Uterus (tissue), 4 donors: ENCODE measurements at regions of chr17 and their contacts with region 1.

Region 1: DNA sequence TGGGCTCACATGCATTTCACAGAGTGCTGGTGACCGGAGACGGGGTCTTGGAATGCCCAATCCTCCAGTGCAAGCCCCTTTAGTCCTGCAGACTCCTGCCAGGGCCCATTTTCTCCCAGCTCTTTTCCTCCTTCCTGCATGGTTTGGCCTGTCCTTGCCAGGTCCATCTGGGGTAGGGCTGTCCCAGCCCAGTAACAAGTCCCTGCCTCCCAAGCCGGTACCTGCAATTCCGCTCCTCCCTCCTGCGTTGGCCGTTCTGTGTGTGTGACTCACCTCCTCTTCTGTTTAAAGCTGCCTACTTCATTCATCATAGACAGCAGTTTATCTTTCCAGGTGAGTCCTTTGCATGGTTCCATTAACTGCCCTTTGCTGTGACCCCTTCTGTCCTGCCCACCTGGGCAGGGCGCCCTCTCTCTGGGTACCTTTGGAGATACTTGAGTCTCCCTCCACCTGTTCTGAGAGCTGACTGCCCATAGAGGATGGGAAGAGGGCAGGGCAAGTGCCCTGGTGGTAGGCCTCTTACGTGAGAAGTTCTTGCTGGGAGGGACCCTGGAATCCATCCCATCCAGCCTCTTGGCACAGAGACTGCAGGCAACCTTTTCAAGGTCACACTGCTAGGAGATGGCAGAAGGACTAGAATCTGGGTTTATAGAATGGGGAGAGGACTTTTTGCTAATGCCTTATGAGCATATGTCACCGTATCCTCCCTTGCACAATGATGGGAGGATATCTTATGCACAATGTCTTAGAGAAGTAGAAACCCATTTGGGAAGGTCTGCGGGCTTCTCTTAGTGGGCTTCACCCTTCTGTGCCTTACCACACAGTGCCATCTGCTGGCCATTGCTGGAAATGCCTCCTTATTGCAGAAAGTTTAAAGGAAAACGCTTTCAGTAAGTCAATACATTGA is 29.7 kb upstream of the LGALS9 start:
- DNase-seq: peak; percentile 82 to 88
- H3K4me3 ChIP-seq: no peak overlapping the region
- H3K27ac ChIP-seq: no peak overlapping the region
- H3K4me1 ChIP-seq: no peaks in the 10 kb centered on the region
- H3K27me3 ChIP-seq: no peaks in the 10 kb centered on the region
- CTCF ChIP-seq: peak; percentile 92 to 95 (median 93)
- POLR2A ChIP-seq: no peak

Region 2: DNA sequence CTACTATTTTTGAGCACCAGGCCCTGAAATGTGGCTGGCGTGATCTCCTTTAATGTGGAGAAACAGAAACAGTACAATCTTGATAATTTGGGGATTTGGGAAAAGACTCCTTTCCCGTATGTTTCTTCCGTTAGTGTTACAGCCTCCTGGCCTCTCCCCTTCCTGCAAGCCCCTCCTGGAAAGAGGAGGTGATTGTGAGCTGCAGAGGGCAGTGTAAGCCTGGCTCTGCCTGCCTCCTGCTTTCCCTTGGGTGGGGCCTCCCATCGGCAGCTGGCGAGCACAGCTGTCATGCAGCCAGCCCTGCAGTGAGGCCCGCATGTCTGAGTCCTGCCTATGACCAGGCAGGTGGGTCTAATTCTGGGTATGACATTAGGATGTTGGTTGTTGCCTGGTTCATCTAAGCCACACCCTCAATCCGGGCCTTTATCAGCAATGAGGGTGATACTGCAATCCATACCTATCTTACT is 356.1 kb before region 1 on chr17:
- intact Hi-C with region 1: loop called (anchors 5 kb)
- DNase-seq: peak; percentile 83 to 87
- H3K4me3 ChIP-seq: no peak overlapping the region
- H3K27ac ChIP-seq: peak overlapping the region; percentile 84 to 91
- H3K4me1 ChIP-seq: peaks cover 3 to 5% of the 10 kb centered on the region in 2 donors
- H3K27me3 ChIP-seq: no peaks in the 10 kb centered on the region
- CTCF ChIP-seq: peak; percentile 66 to 79 (median 76)
- POLR2A ChIP-seq: no peak

Region 3: DNA sequence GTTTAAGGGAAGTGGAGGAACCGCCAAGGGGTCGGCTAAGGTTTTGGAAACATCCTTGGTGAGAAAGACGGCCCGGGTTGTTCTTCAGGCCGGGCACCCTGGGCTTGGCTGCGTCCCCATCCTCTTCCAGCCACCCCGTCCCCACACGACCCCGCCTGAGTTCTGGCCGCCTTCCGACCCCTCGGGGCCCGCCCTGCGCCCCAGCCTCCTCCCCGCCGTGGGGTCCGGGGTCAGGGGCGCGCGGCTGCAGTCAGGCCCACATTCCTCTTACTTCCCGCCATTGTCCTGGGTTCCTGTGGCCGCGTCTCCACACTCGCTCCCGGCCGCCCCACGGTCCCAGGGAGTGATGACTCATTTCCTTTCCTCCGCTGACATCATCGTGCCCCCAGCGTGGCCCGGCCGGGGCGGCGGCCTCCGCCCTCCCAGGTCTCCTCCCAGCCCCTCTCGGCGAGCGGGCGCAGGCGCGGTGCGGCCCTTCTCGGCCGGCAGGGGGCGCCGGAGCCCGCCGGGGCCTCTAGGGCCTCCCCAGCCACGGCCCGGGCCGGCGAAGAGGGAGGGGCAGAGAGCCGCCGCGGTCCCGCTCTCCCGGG is 247.8 kb before region 1 on chr17:
- intact Hi-C with region 1: loop called (anchors 5 kb)
- DNase-seq: peak; percentile 94 to 95
- H3K4me3 ChIP-seq: peak overlapping the region; percentile 49 to 86
- H3K27ac ChIP-seq: peak overlapping the region; percentile 93 to 99
- H3K4me1 ChIP-seq: no peaks in the 10 kb centered on the region
- H3K27me3 ChIP-seq: no peaks in the 10 kb centered on the region
- CTCF ChIP-seq: peak; percentile 79 to 100 (median 99)
- POLR2A ChIP-seq: peak; percentile 74 to 99

Region 4: DNA sequence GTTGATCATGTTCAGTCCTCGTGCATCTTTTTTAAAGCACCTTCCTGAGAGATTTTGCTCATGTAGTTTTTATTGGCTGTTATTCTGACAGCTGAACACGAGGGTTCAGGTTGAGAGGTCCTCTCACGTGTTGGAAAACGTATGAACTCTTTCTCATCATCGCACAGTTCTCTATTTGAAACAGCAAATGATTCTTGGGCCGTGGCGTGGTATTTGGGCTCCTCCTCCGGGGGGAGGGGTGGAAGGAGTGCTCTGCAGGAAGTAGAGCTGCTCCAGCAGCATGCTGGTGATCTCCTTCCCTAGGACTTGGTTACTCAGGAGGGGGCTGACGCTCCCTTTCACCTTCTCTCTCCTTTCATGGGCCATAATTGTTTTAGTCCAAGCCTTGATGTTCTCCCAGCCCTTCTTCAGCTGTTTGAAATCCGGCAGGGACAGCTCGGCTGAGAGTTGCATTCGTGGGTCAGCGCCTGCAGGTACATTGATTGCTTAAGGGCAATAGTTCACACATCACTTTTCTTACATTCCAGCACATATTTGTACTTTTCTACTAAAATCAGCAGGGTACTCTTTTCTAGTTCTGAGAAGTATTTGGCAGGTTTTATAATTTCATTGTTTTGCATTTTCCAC is 74.6 kb before region 1 on chr17:
- intact Hi-C with region 1: no loop called
- DNase-seq: no peak
- H3K4me3 ChIP-seq: no peak overlapping the region
- H3K27ac ChIP-seq: no peak overlapping the region
- H3K4me1 ChIP-seq: no peaks in the 10 kb centered on the region
- H3K27me3 ChIP-seq: no peaks in the 10 kb centered on the region
- CTCF ChIP-seq: no peak
- POLR2A ChIP-seq: no peak

Region 5: DNA sequence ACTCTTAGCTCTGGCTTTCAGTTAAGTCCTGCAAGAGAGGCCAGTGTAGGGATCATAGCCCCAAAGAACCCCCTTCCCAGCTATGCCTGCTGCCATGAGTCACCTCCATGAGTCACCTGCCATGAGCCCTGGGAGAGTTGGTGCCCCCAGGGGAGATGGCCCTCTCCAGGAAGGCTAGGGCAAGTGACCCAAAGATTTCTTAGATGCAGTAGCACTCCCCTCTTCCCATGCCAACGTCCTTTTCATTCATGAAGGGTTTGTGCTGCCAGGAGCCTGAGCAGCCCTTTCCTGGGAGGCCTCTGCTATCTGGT is 48.9 kb before region 1 on chr17:
- intact Hi-C with region 1: no loop called
- DNase-seq: no peak
- H3K4me3 ChIP-seq: no peak overlapping the region
- H3K27ac ChIP-seq: no peak overlapping the region
- H3K4me1 ChIP-seq: no peaks in the 10 kb centered on the region
- H3K27me3 ChIP-seq: no peaks in the 10 kb centered on the region
- CTCF ChIP-seq: no peak
- POLR2A ChIP-seq: no peak

Region 6: DNA sequence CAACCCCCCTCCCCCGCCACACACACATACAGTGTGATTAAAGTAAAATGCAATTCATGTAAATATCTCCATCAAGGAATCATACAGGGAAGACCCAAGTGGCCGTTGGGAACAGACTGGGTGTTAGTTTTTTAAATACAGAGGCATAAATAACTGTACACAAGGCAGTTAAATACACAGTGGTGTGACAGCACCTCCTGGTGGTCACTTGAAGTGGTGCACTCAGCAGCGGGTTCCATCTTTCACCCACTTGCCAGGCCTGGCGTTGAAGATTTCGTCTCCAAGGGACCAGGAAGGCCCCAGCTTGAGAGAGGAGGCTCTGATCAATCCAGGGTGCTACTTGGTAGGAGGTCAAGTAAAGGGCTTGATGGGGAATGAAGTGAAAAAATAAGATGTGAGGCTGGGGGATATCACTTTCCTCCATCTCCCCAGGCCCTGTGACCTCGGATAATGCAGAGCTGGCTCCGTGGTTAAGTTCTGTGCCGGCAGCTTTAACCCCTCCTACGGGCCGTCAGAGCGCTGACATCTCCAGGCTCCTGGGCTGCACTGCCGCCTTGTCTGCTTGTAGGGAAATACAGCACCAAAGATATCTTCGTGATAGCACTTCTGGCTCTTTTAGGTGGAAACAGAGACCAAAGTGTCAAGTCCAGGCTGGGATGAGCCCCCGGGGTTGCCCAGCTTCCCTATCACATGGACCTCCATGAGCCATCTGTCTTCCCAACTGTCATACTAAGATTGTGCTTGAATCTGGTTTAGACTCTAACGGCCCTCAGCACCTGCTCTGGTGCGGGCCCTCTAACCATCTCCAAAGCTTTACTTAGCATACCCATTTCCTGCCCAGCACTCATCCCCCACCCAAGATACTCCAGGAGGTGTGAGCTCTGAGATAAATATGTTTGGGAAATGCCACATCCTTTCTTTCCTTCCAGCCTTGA is 50.4 kb after region 1 on chr17:
- intact Hi-C with region 1: loop called (anchors 2 kb)
- DNase-seq: peak; percentile 70 to 71
- H3K4me3 ChIP-seq: no peak overlapping the region
- H3K27ac ChIP-seq: no peak overlapping the region
- H3K4me1 ChIP-seq: no peaks in the 10 kb centered on the region
- H3K27me3 ChIP-seq: no peaks in the 10 kb centered on the region
- CTCF ChIP-seq: peak; percentile 91 to 94 (median 91)
- POLR2A ChIP-seq: no peak